Heart right ventricle (tissue), 16 donors: ENCODE measurements at regions of chr12 and their contacts with region 1.

Region 1: DNA sequence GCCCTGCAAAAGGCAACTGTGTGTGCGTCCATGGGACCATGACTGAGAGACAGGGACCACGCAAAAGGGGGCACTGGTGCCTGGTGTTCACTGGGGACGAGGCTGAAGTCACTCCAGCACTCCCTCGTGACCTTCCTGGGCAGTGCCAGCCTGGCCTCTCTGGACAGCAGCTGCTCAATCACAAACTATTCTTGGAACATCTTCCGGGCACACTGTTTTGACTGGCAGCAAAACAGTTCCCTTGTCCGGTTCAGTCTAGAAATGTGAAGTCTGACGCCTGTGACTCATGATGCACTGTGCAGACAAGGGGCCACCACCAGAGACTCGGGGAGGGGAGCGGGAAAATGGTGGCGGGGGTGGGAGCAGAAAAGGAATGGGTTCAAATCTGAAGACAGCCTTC is 20.8 kb downstream of the SNRNP35 start:
- DNase-seq: peak; percentile 65 to 71
- ATAC-seq: peak; percentile 75 to 91 (median 87)
- H3K4me3 ChIP-seq: no peak overlapping the region
- H3K27ac ChIP-seq: peak overlapping the region; percentile 75 to 94 (median 90)
- H3K4me1 ChIP-seq: peaks cover 5 to 48% (median 22%) of the 10 kb centered on the region in 9 donors
- H3K27me3 ChIP-seq: no peaks in the 10 kb centered on the region
- CTCF ChIP-seq: no peak

Region 2: DNA sequence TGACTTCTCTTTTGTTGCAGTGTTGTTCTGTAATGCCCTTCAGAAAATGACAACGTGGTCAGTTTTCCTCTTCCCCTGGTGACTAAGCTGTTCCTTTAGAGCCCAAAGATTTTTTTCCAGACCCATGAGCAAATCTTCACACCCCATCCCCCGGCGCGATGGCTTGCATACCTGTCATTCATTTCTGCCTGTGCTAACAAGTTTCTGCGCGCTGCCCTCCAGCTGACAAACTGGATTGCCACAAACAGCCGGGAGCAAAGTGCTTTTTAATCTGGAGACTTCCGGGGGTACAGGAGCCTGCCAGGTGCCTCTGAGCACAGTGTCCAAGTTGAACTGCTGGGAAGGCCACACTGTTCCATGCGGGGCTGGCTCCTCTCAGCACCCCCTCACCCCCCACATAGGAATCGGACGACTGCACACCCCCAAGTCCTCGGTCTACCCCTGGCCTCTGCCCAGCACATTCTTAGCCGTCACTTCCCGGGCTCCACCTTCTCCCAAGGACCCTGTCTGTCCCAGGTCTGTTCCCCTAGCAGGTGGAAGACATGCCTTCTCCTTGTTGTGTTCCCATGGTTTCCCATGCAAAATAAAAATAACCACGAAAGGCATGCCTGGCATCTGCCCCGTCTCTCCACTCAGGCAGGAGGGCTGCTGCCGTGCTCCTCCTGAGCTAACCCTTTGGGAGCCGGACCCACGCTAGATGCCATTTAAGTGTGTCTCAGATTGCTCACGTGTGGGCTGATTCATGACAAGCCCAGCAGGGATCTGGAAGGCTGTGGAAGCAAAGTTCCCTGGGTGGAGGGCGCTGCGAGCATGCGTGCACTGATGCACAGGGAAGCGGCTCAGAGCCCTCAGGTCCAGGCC is 40.6 kb after region 1 on chr12:
- intact Hi-C with region 1: loop called in 2 of 10 experiments (anchors 2 to 5 kb)
- DNase-seq: peak; percentile 60 to 69
- ATAC-seq: peak; percentile 71 to 93 (median 77)
- H3K4me3 ChIP-seq: no peak overlapping the region
- H3K27ac ChIP-seq: peak overlapping the region; percentile 69 to 91 (median 82)
- H3K4me1 ChIP-seq: peaks cover 4 to 56% (median 23%) of the 10 kb centered on the region in 9 donors
- H3K27me3 ChIP-seq: no peaks in the 10 kb centered on the region
- CTCF ChIP-seq: no peak

Region 3: DNA sequence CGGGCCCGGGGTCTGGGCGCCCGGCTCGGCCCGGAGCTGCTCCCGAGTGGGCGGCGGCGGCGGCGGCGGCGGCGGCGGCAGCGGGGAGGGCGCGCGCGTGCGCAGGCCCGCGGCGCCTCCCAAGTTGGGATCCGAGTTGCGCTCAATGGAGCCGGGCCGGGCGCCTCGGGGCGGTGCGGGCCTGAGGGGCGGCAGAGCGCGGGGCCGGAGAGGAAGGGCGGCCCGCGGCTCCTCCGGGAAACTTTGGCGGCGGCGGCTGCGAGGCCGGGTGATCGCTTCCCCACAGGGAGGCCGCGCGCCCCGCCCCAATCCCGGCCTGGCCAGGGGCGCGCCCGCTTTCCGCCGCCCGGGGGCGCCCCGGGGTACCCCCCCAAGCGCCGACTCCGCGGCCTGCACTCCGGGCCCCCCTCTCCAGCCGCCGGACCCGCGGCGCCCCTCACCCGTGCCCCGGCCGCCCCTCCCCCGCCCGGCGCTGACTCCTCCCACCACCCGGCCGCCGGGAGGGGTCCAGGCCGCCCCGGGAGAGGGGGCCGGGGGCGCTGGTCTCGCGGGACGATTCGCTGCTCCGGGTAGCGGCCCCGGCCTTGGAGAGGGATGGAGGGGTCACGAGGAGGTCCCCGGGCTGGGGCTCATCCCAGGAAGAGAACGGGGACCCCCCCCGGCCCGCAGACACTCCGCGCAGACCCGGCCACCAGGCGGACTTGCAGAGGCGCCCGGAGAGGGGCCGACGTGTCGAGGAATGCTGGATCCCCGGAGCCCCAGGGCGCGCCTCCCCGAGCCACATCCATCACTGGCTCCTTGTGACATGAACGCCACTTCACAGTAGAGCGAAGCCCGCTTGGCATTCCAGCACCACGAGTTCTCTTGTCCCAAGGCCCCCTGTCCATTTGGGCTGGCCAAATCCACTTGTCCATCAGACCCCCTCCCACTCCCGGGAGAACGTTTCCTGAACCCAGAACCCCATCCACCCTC is 55.2 kb after region 1 on chr12 and contains the start of gene RILPL1:
- intact Hi-C with region 1: loop called in 6 of 10 experiments (anchors 5 to 10 kb)
- DNase-seq: peak; percentile 40 to 62
- ATAC-seq: peak; percentile 46 to 88 (median 66)
- H3K4me3 ChIP-seq: peak within 1 kb of the TSS; percentile 56 to 96 (median 78)
- H3K27ac ChIP-seq: peak within 1 kb of the TSS; percentile 85 to 97 (median 93)
- H3K4me1 ChIP-seq: peaks cover 15 to 49% (median 32%) of the 10 kb centered on the region in 9 donors
- H3K27me3 ChIP-seq: peaks cover 0 to 22% (median 0%) of the 10 kb centered on the region in 7 donors
- CTCF ChIP-seq: peak in 7 of 9 donors; percentile 15 to 57 (median 48)
- total RNA-seq, gene RILPL1: 71.4 to 132 (median 86.6) TPM

Region 4: GRCh38 chr12:123571343-123571813 is 92.6 kb after region 1 on chr12:
- intact Hi-C with region 1: loop called in 1 of 10 experiments (anchors 10 kb)
- DNase-seq: peak; percentile 31 to 38
- ATAC-seq: peak in 7 of 8 donors; percentile 46 to 90 (median 71)
- H3K4me3 ChIP-seq: no peak overlapping the region
- H3K27ac ChIP-seq: peak overlapping the region in 1 of 10 donors; percentile 20
- H3K4me1 ChIP-seq: peaks cover 0 to 5% (median 0%) of the 10 kb centered on the region in 9 donors
- H3K27me3 ChIP-seq: no peaks in the 10 kb centered on the region
- CTCF ChIP-seq: no peak